ENCODE measurements at regions of chr7 and their contacts with region 1.

Region 1: DNA sequence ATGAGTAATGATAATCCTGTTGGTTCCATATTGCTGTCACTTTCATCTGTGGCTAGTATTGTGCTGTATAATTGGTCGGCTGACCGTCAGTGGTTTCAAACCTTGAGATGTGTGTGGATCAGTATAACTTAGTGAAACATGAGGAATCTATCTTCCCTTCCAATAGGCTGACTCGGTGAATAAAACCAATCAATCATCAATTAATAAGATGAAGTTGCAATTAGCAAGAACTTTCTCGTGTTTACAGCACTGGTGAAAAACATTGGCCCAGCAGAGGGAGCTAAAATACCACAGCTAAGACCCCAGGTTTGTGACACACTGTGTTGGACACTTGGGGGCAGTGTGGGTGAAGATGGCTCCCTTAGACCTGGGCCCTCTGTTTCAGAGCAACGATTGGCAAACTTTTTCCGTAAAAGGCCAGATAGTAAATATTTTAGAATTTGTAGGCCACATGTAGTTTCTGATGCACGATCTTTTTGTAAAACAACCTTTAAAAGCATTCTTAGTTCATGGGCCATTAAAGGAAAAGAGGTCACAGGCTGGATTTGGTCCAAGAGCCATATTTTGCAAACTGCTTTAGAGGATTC is 47.8 kb downstream of the STRA8 start:
- DNase-seq: peak; percentile 80
- CTCF ChIP-seq: peak; percentile 98

Region 2: DNA sequence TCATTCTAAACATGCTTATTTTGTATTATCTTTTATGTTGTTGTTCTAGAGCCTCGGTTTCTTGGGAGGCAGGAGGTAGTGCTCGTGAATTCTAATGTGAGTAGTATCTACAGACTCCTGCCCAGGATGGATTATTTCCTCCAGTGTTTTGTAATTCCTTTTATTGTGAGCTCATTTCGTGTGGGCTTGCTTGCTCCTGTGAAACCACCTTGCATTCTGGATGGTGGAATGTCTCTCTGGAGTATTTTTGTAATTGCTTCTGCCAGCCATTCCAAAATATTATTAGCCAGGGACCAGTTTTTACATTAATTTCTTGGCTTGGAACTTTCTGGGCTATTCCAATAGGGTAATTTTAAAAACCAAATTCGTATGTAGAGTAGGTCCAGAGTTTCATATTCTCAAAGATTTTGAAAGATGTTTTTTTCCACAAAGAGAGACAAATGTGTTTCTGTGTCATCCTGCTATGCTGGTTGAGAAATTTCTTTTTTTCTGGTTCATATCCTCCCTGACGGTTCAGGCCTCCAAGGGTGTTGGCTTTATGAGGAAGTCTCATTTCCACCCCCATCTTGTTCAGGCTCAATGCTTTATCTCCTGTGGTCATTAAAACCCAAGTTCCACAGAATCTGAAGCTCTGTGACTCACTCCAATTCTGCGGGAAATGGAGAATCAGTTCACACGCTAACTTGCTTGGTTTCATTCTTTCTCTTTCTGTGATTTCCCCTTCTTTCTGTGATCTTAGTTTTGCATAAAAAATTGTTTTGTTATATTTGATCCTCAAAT is 543.7 kb before region 1 on chr7:
- CTCF ChIA-PET with region 1: no interaction called
- POLR2A ChIA-PET with region 1: no interaction called
- DNase-seq: no peak
- CTCF ChIP-seq: no peak

Region 3: DNA sequence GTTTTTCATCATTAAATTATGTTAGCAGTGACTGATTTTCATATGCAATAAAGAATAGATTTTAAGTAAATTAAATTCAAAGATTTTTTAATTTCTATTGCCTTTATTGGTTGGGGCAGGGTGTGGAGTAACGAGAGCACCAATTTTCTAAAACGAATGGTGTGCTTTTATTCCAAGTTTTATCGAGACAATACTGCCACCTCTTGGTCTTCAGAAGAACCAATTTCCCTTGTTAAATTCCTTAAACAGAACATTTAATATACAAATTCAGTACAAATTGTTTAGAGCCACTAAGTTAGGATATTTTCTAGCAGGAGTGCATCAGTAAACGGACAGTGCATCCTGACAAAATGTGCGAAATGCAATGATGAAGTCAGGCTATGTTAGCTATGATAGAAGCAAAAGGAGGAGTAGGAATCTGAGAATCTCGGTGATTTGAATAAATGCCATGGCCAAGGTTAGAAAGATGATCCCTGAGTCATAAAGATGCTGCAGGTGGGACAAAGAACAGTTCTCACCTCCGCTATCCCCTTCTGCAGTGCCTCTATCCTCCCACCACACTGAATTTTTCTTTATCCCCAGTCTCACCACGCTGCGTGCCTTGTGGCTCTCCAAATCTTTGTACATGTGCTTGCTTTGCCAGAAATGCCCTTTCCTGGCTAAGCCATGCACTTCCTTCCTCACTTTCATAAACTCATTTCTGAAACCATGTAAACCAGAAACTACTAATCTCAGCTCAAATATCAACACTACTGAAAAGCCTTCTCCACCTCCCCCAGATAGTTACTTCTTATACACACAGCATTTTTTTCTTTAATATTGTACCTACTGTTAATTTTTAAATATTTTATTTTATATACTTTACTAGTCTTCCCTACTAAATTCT is 327.0 kb before region 1 on chr7:
- CTCF ChIA-PET with region 1: no interaction called
- POLR2A ChIA-PET with region 1: no interaction called
- DNase-seq: peak; percentile 37
- CTCF ChIP-seq: peak; percentile 57

Region 4: DNA sequence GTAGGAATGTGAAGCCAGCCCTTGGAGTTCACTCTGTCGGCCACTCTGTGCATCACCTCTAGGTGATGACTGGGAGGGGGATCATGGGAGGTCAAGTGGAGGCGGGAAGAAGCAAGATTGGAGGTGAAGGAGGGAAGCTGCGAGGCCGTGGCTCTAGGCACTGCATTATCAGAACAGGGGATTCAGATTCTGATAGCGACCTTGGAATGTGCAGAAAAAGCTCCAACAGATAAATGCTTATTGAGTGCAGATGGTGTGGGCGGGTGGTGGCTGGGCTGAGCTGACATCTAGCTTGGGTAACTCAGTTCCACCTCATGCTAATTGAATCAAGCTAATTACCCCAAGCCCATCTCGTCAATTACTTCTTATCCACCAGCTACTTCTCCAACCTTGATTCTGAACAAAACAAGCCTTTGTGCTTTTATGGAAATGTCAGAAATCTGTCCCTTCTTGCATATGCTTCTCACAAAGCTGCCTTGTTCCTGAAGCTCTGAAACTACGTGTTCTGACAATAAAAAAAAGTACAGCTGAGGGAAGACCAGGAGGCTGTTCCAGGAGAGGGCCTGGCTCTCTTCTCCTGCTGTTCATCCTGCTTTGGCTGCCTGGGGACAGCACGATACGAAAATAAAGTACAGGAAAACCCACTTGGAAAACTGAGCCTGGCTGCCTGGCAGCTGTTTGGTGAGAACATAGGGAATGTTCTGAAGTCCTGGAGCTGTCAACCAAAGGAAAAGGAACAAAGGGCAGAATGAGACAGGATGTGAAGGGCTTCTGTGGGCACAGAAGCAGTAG is 20.3 kb before region 1 on chr7:
- CTCF ChIA-PET with region 1: interaction called, 30 read pairs
- POLR2A ChIA-PET with region 1: no interaction called
- DNase-seq: no peak
- CTCF ChIP-seq: no peak

Region 5: DNA sequence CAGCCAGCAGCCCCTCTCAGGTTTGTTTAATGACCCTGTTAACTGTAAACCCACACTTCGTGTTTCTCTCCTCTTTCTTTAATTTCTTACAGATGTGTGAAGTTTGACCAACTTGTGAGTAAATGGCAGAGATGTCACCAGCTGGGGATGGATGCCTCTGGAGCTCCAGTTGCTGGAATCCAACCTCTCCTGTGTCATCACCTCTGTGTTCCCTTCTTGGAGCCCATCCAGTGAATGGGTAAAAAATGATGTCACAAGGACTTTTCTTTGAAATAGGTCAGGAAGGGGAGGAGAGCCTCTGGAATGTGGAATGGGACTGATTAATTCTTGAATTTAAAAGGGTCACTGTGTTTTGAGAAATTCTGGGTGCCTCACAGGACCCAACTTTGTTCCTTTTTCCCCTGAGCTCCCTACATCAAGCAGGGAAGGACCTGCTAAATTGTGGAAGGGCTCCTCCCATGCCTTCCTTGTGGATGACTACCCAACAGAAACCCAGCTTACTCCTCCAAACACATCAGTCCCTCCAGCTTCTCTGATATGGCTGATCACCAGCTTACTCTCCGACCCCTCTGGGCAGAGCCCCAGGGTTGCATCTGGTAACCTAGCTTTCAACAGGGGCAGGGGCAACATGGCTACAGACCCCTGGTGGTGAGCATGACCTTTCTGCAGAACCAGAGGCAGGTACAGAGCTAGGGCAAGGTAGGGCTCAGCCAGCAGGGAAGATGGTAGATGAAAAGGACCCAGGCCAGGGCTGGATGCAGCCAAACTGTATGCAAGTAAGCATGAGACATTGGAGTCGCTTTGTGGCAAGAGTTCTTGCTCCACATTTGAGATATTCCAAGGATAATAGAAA is 19.7 kb after region 1 on chr7:
- CTCF ChIA-PET with region 1: interaction called, 13 read pairs
- POLR2A ChIA-PET with region 1: no interaction called
- DNase-seq: no peak
- CTCF ChIP-seq: no peak

Region 6: DNA sequence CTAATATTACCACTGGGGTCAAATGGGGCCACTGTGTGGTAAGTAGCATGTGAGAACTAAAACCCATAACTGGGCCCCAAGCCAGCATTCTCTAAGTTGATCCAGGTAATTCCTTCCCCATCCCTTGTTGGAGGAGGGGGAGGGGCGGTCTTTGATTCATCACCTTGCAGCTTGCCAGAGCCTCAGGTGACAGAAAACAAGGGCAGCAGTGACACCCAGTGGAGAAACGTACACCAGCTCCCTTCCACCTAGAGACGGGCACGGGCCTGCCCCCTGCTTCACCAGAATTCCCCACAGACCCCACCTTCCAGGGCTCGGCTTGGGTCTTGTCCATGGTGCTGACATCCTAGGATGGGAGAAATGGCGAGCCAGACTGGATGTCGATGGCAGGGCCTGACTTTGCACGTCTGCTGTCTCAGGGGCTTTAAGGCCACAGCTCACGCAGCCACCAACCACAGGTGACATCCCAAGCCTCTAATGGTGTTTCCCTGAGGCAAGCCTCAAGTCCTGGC is 54.2 kb after region 1 on chr7:
- CTCF ChIA-PET with region 1: interaction called, 73 read pairs
- POLR2A ChIA-PET with region 1: no interaction called
- DNase-seq: peak; percentile 70
- CTCF ChIP-seq: peak; percentile 38

Region 7: GRCh38 chr7:135672560-135673359 is 391.3 kb after region 1 on chr7:
- CTCF ChIA-PET with region 1: interaction called, 10 read pairs
- POLR2A ChIA-PET with region 1: no interaction called
- DNase-seq: peak; percentile 45
- CTCF ChIP-seq: peak; percentile 58